Spleen (tissue), 13 donors: ENCODE measurements at regions of chr3 and their contacts with region 1.

Region 1: GRCh38 chr3:196969660-196970546 is 1.3 kb upstream of the PIGZ start:
- DNase-seq: peak; percentile 93
- H3K4me3 ChIP-seq: peak overlapping the region; percentile 72 to 97 (median 86)
- H3K27ac ChIP-seq: peak overlapping the region in 6 of 8 donors; percentile 44 to 85 (median 76)
- H3K4me1 ChIP-seq: peaks cover 0 to 26% (median 17%) of the 10 kb centered on the region in 6 donors
- H3K27me3 ChIP-seq: peaks cover 0 to 7% (median 0%) of the 10 kb centered on the region in 7 donors
- CTCF ChIP-seq: peak in 8 of 11 experiments; percentile 45 to 95 (median 94)
- POLR2A ChIP-seq: no peak

Region 2: GRCh38 chr3:195716865-195717210 is 1253.1 kb before region 1 on chr3:
- intact Hi-C with region 1: no loop called
- DNase-seq: no peak
- H3K4me3 ChIP-seq: no peak overlapping the region
- H3K27ac ChIP-seq: no peak overlapping the region
- H3K4me1 ChIP-seq: no peaks in the 10 kb centered on the region
- H3K27me3 ChIP-seq: peaks cover 0 to 4% (median 0%) of the 10 kb centered on the region in 7 donors
- CTCF ChIP-seq: no peak
- POLR2A ChIP-seq: no peak

Region 3: DNA sequence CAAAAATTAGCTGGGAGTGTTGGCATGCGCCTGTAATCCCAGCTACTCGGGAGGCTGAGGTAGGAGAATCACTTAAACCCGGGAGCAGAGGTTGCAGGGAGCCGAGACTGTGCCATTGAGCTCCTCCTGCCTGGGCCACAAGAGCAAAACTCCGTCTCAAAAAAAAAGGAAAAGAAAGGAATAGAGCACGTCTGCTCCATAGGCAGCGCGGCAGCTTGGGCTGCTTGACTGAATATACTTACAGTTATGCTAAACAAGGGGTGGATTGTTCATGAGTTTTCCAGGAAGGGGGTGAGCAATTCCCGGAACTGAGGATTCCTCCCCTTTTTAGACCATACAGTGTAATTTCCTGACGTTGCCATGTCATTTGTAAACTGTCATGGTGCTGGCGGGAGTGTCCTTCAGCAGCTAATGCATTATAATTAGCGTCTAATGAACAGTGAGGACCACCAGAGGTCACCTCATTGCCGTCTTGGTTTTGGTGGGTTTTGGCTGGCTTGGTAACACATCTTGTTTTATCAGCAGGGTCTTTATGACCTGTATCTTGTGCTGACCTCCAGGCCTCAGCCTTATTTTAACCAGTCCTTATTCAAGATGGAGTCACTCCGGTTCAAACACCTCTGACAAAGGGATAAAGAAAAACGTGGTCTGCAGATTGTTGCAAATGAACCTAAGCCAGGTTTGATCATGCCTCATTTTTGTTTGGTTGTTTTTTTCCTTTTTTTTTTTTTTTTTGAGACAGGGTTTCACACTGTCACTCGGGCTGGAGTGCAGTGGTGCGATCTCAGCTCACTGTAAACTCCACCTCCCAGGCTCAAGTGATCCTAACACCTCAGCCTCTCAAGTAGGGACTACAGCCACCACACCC is 127.1 kb before region 1 on chr3:
- intact Hi-C with region 1: loop called (anchors 10 kb)
- DNase-seq: no peak
- H3K4me3 ChIP-seq: no peak overlapping the region
- H3K27ac ChIP-seq: no peak overlapping the region
- H3K4me1 ChIP-seq: peaks cover 0 to 6% (median 4%) of the 10 kb centered on the region in 6 donors
- H3K27me3 ChIP-seq: no peaks in the 10 kb centered on the region
- CTCF ChIP-seq: no peak
- POLR2A ChIP-seq: no peak

Region 4: GRCh38 chr3:197186887-197187588 is 217.1 kb after region 1 on chr3:
- intact Hi-C with region 1: loop called (anchors 10 kb)
- DNase-seq: no peak
- H3K4me3 ChIP-seq: no peak overlapping the region
- H3K27ac ChIP-seq: no peak overlapping the region
- H3K4me1 ChIP-seq: peaks cover 0 to 15% (median 0%) of the 10 kb centered on the region in 6 donors
- H3K27me3 ChIP-seq: no peaks in the 10 kb centered on the region
- CTCF ChIP-seq: peak; percentile 55 to 81 (median 77)
- POLR2A ChIP-seq: no peak